WTC11 (cell line): ENCODE measurements at regions of chr5 and their contacts with region 1.

Region 1: GRCh38 chr5:168291464-168291961 is at the start of gene WWC1:
- DNase-seq: peak; percentile 90
- ATAC-seq: peak; percentile 75
- H3K4me3 Mint-ChIP-seq: peak within 1 kb of the TSS; percentile 89
- H3K27ac Mint-ChIP-seq: peak within 1 kb of the TSS; percentile 92
- H3K4me1 Mint-ChIP-seq: peaks cover 64% of the 10 kb centered on the region
- H3K27me3 Mint-ChIP-seq: peaks cover 15% of the 10 kb centered on the region
- CTCF ChIP-seq: no peak
- total RNA-seq, gene WWC1: 29.1 to 48.4 TPM (median 31.6 TPM) in 3 replicates

Region 2: GRCh38 chr5:168006456-168007130 is 284.9 kb before region 1 on chr5:
- CTCF ChIA-PET with region 1: no interaction called
- POLR2A ChIA-PET with region 1: no interaction called
- DNase-seq: no peak
- ATAC-seq: no peak
- H3K4me3 Mint-ChIP-seq: no peak overlapping the region
- H3K27ac Mint-ChIP-seq: no peak overlapping the region; the same call in 1 of the 2 replicates
- H3K4me1 Mint-ChIP-seq: peaks cover 10% of the 10 kb centered on the region; the same call in 1 of the 2 replicates
- H3K27me3 Mint-ChIP-seq: no peaks in the 10 kb centered on the region
- CTCF ChIP-seq: no peak

Region 3: GRCh38 chr5:168020542-168021294 is 270.8 kb before region 1 on chr5:
- CTCF ChIA-PET with region 1: no interaction called
- POLR2A ChIA-PET with region 1: no interaction called
- DNase-seq: no peak
- ATAC-seq: no peak
- H3K4me3 Mint-ChIP-seq: no peak overlapping the region
- H3K27ac Mint-ChIP-seq: no peak overlapping the region
- H3K4me1 Mint-ChIP-seq: peaks cover 17% of the 10 kb centered on the region
- H3K27me3 Mint-ChIP-seq: 0 out of 2 replicates have a peak, but pooled peaks cover 3% of the 10 kb centered on the region
- CTCF ChIP-seq: no peak

Region 4: GRCh38 chr5:168193493-168194250 is 97.8 kb before region 1 on chr5:
- CTCF ChIA-PET with region 1: no interaction called
- POLR2A ChIA-PET with region 1: no interaction called
- DNase-seq: no peak
- ATAC-seq: no peak
- H3K4me3 Mint-ChIP-seq: no peak overlapping the region
- H3K27ac Mint-ChIP-seq: no peak overlapping the region
- H3K4me1 Mint-ChIP-seq: peaks cover 7% of the 10 kb centered on the region; the same call in 1 of the 2 replicates
- H3K27me3 Mint-ChIP-seq: no peaks in the 10 kb centered on the region
- CTCF ChIP-seq: no peak

Region 5: DNA sequence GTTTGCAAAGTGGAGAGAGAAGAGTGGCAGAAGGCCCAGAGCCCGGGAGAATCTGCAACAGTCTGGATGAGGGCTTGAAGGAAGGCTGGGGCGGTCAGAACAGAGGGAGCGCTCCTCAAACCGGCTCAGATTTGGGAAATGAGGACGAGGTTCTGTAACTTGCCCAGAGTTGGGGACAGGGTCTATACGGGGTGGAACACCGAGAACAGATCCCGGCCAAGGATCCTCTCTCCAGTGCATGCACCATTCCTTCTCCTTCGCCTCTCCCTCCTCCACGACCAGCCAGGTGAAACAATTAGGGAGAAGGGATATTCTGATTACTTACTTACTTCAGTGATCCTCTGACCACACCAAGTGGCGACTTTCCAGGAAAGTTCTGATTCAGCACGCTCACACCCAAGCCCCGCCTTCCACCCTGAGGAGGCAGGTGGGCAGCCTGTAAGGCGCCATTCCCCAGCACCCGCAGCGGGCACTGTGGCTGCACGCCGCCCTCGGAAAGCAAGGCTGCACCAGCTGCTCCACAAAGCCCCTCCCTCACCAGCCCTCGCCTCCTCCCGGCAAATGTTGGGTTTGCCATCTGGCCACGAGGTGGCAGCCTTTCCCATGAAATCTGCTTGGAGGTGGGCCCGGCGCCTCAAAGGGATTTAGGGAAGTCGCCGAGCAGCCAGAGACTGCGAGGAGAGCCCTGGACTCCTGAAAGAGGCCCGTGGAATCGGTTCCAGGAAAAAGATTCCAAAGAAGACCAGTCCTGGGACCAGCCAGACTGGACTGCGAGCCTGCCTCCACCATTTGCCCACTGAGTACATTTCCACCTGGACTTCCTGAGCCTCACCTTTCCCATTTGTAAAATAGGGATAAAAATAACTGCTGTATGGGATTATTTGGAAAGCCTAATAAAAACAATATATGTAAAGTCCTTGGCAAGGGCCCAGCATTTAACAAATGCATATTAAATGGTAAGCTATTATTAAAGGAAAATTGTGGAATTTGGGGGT is 22.3 kb before region 1 on chr5:
- CTCF ChIA-PET with region 1: interaction called, 27 read pairs
- POLR2A ChIA-PET with region 1: interaction called, 3 read pairs
- DNase-seq: peak; percentile 96
- ATAC-seq: peak; percentile 94
- H3K4me3 Mint-ChIP-seq: peak overlapping the region; percentile 79
- H3K27ac Mint-ChIP-seq: no peak overlapping the region
- H3K4me1 Mint-ChIP-seq: peaks cover 23% of the 10 kb centered on the region
- H3K27me3 Mint-ChIP-seq: peaks cover 14% of the 10 kb centered on the region
- CTCF ChIP-seq: peak; percentile 78

Region 6: DNA sequence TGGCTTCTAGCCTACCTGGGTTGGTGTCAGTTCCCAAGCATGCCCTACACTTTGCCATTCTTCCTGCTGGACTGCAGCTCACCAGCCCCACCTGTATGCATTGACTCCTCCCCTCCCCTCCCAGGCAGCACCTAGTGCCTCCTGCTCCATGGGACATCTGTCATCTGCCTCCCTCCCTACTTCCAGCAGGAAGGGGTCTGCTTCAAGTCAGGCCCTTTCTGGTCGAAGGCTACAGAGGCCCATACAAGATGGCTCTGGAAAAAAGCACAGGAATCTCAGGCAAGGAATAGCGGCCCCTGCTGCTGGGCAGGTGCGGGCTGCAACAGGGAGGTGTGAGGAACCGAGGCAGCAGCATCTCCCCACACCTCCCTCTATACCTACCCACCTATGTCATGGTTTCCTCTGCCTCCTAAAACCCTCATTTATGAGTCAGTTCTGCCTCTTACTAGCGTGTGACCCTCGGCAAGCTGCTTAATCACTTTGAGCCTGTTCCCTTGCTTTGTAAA is 19.6 kb after region 1 on chr5:
- CTCF ChIA-PET with region 1: interaction called, 48 read pairs
- POLR2A ChIA-PET with region 1: interaction called, 5 read pairs
- DNase-seq: peak; percentile 52
- ATAC-seq: peak; percentile 86
- H3K4me3 Mint-ChIP-seq: no peak overlapping the region
- H3K27ac Mint-ChIP-seq: no peak overlapping the region
- H3K4me1 Mint-ChIP-seq: peaks cover 28% of the 10 kb centered on the region
- H3K27me3 Mint-ChIP-seq: peaks cover 36% of the 10 kb centered on the region
- CTCF ChIP-seq: no peak

Region 7: DNA sequence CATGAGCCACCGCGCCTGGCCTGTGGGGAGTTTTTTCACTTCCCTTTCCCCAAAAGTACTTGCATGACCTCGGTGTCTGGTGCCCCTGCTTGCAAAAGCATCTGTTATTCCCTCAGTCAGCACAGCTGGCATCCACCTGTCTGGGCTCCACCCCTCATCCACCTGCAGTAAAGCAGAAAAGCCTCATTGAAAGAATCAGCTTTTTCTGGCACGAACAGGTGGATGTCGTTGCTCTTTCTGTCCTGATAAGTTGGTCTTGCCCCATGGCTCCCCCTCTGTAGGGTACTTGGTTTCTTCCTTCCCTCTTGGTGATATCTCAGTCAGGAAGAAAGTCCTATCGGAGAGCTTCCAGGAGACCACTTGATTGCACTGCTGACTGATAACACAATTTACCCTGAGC is 37.3 kb after region 1 on chr5:
- CTCF ChIA-PET with region 1: interaction called, 18 read pairs
- POLR2A ChIA-PET with region 1: interaction called, 3 read pairs
- DNase-seq: peak; percentile 70
- ATAC-seq: peak; percentile 77
- H3K4me3 Mint-ChIP-seq: peak overlapping the region; percentile 57
- H3K27ac Mint-ChIP-seq: peak overlapping the region; percentile 96
- H3K4me1 Mint-ChIP-seq: peaks cover 81% of the 10 kb centered on the region
- H3K27me3 Mint-ChIP-seq: no peaks in the 10 kb centered on the region
- CTCF ChIP-seq: no peak

Region 8: DNA sequence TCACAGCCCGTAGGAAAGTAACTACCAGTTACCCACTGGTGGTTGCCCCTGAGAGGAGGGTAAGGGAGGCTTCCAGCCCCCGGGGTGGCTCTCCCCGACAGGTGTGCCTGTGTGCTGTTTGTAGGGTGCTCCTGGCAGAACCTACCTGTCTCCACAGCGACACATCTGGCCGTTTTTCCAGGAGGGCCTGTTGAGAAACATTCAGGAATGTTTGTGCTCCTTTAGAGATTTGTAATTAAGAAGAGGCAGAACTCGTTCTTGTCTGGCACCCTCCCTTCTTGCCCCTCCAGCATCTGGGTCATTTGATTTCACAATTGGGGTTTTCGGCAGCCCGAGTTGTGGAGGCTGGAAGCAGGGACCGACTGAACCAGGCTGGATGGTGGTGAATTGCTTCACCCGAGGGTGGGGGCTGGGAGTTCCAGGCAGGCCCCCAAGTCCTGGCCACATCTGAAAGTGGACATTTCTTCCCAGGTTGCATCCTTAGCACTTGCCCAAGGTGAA is 74.1 kb after region 1 on chr5:
- CTCF ChIA-PET with region 1: interaction called, 18 read pairs
- POLR2A ChIA-PET with region 1: interaction called, 3 read pairs
- DNase-seq: peak; percentile 60
- ATAC-seq: peak; percentile 74
- H3K4me3 Mint-ChIP-seq: no peak overlapping the region
- H3K27ac Mint-ChIP-seq: peak overlapping the region; percentile 22; the same call in 1 of the 2 replicates
- H3K4me1 Mint-ChIP-seq: peaks cover 31% of the 10 kb centered on the region
- H3K27me3 Mint-ChIP-seq: no peaks in the 10 kb centered on the region
- CTCF ChIP-seq: no peak